ENCODE measurements at regions of chr10 and their contacts with region 1.

Region 1: GRCh38 chr10:91251430-91252056 is 31.1 kb downstream of the PCGF5 start:
- DNase-seq: peak; percentile 30
- ATAC-seq: peak; percentile 83
- H3K4me3 ChIP-seq: no peak overlapping the region
- H3K27ac ChIP-seq: no peak overlapping the region
- H3K4me1 ChIP-seq: no peaks in the 10 kb centered on the region
- H3K27me3 ChIP-seq: no peaks in the 10 kb centered on the region
- CTCF ChIP-seq: peak; percentile 77 to 90 (median 81); a peak in 5 of 6 replicates
- EP300 ChIP-seq: no peak
- POLR2A ChIP-seq: no peak
- RAD21 ChIP-seq: peak; percentile 99

Region 2: DNA sequence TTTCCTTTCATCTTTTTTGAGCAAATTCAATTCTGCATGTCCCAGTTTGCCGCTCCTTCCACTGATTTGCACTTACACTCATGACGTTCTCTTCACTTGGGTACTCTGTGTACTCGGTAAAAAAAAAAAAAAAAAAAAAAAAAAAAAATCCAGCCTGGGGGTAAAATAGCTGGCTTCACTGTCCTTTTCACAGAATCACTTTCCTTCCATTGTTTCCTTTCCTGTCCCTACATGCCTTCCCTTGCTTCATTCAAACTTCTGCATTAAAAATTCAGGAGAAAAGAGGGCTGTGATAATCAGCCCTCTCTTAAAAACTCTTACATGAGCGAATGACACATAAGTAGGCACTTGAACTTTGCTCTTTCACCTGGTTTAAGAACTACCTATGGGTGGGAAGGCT is 339.4 kb before region 1 on chr10:
- CTCF ChIA-PET with region 1: interaction called, 253 read pairs
- POLR2A ChIA-PET with region 1: interaction called, 8 read pairs
- RAD21 ChIA-PET with region 1: interaction called, 184 read pairs
- SMC1A ChIA-PET with region 1: interaction called, 202 read pairs
- in situ Hi-C with region 1: loop called (anchors 5 kb)
- intact Hi-C with region 1: loop called (anchors 1 kb)
- DNase-seq: no peak
- ATAC-seq: no peak
- H3K4me3 ChIP-seq: no peak overlapping the region
- H3K27ac ChIP-seq: no peak overlapping the region
- H3K4me1 ChIP-seq: no peaks in the 10 kb centered on the region
- H3K27me3 ChIP-seq: no peaks in the 10 kb centered on the region
- CTCF ChIP-seq: no peak
- EP300 ChIP-seq: no peak
- POLR2A ChIP-seq: no peak
- RAD21 ChIP-seq: no peak

Region 3: GRCh38 chr10:90999512-91000172 is 251.9 kb before region 1 on chr10:
- CTCF ChIA-PET with region 1: interaction called, 289 read pairs
- POLR2A ChIA-PET with region 1: no interaction called
- RAD21 ChIA-PET with region 1: interaction called, 203 read pairs
- SMC1A ChIA-PET with region 1: interaction called, 296 read pairs
- in situ Hi-C with region 1: loop called (anchors 10 kb)
- intact Hi-C with region 1: no loop called
- DNase-seq: peak; percentile 54
- ATAC-seq: peak; percentile 69
- H3K4me3 ChIP-seq: no peak overlapping the region
- H3K27ac ChIP-seq: peak overlapping the region; percentile 87
- H3K4me1 ChIP-seq: peaks cover 33% of the 10 kb centered on the region
- H3K27me3 ChIP-seq: no peaks in the 10 kb centered on the region
- CTCF ChIP-seq: no peak
- EP300 ChIP-seq: peak; percentile 31 to 80; a peak in 2 of 4 replicates
- POLR2A ChIP-seq: no peak
- RAD21 ChIP-seq: no peak

Region 4: GRCh38 chr10:91043173-91043910 is 208.2 kb before region 1 on chr10:
- CTCF ChIA-PET with region 1: interaction called, 41 read pairs
- POLR2A ChIA-PET with region 1: interaction called, 5 read pairs
- RAD21 ChIA-PET with region 1: interaction called, 20 read pairs
- SMC1A ChIA-PET with region 1: interaction called, 43 read pairs
- in situ Hi-C with region 1: no loop called
- intact Hi-C with region 1: loop called (anchors 1 kb)
- DNase-seq: peak; percentile 3
- ATAC-seq: peak; percentile 66
- H3K4me3 ChIP-seq: no peak overlapping the region
- H3K27ac ChIP-seq: no peak overlapping the region
- H3K4me1 ChIP-seq: peaks cover under 1% of the 10 kb centered on the region; the same call in 1 of the 2 replicates
- H3K27me3 ChIP-seq: no peaks in the 10 kb centered on the region
- CTCF ChIP-seq: peak; percentile 18 to 51 (median 28); a peak in 3 of 6 replicates
- EP300 ChIP-seq: no peak
- POLR2A ChIP-seq: no peak
- RAD21 ChIP-seq: peak; percentile 50

Region 5: DNA sequence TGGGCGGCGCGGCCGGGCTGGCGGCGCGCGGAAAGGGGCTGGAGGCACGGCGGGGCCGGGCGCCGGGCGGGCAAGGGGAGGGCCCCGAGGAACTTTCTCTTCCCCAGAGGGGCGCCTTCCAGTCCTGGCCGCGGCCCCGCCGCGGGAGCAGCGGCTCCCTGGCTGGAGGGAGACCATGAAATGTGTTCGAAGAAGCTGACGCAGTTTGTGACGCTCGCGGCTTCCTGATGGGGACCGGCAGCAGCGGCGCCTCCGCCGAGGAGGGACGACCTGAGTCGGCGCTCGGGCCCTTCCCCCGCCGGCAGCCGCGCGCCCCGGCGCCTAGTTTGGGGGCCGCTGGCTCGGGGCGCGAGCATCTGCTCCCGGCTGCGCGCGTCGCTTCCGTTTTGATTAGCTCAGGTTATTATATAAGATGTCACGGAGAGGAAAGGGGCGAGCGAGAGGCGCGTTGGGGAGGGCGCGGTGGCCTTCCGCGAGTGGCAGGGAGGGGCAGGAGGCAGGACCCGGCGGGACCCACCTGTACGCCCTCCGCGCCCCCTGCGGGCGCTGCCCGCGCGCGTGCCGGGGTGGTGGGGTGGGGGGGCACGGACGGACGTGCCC is 88.2 kb before region 1 on chr10:
- CTCF ChIA-PET with region 1: interaction called, 16 read pairs
- POLR2A ChIA-PET with region 1: no interaction called
- RAD21 ChIA-PET with region 1: interaction called, 23 read pairs
- SMC1A ChIA-PET with region 1: interaction called, 16 read pairs
- in situ Hi-C with region 1: no loop called
- intact Hi-C with region 1: no loop called
- DNase-seq: no peak
- ATAC-seq: peak; percentile 74
- H3K4me3 ChIP-seq: peak overlapping the region; percentile 84
- H3K27ac ChIP-seq: peak overlapping the region; percentile 79
- H3K4me1 ChIP-seq: peaks cover 14% of the 10 kb centered on the region; the same call in 1 of the 2 replicates
- H3K27me3 ChIP-seq: no peaks in the 10 kb centered on the region
- CTCF ChIP-seq: no peak
- EP300 ChIP-seq: 0 out of 4 replicates have a peak, but pooled peaks of 1 of the 2 experiments have one; percentile 30
- POLR2A ChIP-seq: peak; percentile 87
- RAD21 ChIP-seq: no peak; the same call in 1 of the 2 replicates

Region 6: GRCh38 chr10:91210435-91210834 is 41.1 kb before region 1 on chr10:
- CTCF ChIA-PET with region 1: interaction called, 14 read pairs
- POLR2A ChIA-PET with region 1: no interaction called
- RAD21 ChIA-PET with region 1: interaction called, 15 read pairs
- SMC1A ChIA-PET with region 1: interaction called, 9 read pairs
- in situ Hi-C with region 1: no loop called
- intact Hi-C with region 1: no loop called
- DNase-seq: no peak
- ATAC-seq: peak; percentile 86
- H3K4me3 ChIP-seq: no peak overlapping the region
- H3K27ac ChIP-seq: no peak overlapping the region
- H3K4me1 ChIP-seq: peaks cover 36% of the 10 kb centered on the region
- H3K27me3 ChIP-seq: no peaks in the 10 kb centered on the region
- CTCF ChIP-seq: no peak
- EP300 ChIP-seq: no peak; a peak in 1 of 4 replicates
- POLR2A ChIP-seq: no peak
- RAD21 ChIP-seq: no peak

Region 7: DNA sequence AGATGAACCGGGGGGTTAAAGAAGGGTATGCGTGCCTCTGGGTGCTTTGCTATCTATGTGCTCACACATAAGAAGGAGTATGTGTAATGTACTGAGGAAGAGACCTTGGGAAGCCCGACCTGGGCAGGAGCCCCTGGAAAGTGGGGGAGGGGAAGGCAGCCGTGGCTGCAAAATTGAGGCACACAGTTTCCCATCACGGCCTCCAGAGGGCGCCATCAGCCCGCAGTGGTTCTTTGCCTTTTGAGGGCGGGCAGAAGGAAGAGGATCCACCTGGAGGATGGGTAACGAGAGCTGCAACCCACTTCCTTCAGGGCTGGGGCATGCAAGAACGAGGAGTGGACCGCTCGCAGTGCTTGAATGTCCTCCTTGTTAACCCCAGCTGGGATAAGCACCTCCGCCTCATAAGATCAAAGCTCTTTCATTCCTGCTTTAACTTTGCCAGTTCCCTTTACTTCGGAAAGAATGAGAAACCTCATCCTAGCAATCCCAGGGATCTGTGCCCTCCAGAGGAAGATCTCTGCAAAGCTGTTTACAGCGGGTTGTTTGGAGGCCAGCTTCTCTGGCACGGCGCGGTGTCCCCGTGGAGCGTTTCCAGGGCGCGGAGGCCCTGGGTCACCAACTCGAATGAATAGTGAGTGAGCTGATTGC is 46.8 kb after region 1 on chr10:
- CTCF ChIA-PET with region 1: interaction called, 11 read pairs
- POLR2A ChIA-PET with region 1: no interaction called
- RAD21 ChIA-PET with region 1: interaction called, 3 read pairs
- SMC1A ChIA-PET with region 1: interaction called, 6 read pairs
- in situ Hi-C with region 1: no loop called
- intact Hi-C with region 1: no loop called
- DNase-seq: no peak
- ATAC-seq: peak; percentile 93
- H3K4me3 ChIP-seq: peak overlapping the region; percentile 46; the same call in 1 of the 2 replicates
- H3K27ac ChIP-seq: no peak overlapping the region
- H3K4me1 ChIP-seq: peaks cover 5% of the 10 kb centered on the region; the same call in 1 of the 2 replicates
- H3K27me3 ChIP-seq: no peaks in the 10 kb centered on the region
- CTCF ChIP-seq: peak; percentile 90 to 97 (median 90)
- EP300 ChIP-seq: no peak
- POLR2A ChIP-seq: no peak
- RAD21 ChIP-seq: peak; percentile 93